ENCODE measurements at regions of chr11 and their contacts with region 1.

Region 1: GRCh38 chr11:108497317-108498045 is 703 bp downstream of the POGLUT3 start:
- DNase-seq: peak; percentile 68
- H3K4me3 Mint-ChIP-seq: peak overlapping the region; percentile 93
- H3K27ac Mint-ChIP-seq: peak overlapping the region; percentile 98
- H3K4me1 Mint-ChIP-seq: peaks cover 23% of the 10 kb centered on the region
- H3K27me3 Mint-ChIP-seq: peaks cover 4% of the 10 kb centered on the region

Region 2: GRCh38 chr11:108008656-108009496 is 488.6 kb before region 1 on chr11 and contains the start of gene CUL5:
- intact Hi-C with region 1: loop called (anchors 1 kb)
- DNase-seq: peak; percentile 86
- H3K4me3 Mint-ChIP-seq: peak within 1 kb of the TSS; percentile 91
- H3K27ac Mint-ChIP-seq: peak within 1 kb of the TSS; percentile 94
- H3K4me1 Mint-ChIP-seq: peaks cover 16% of the 10 kb centered on the region
- H3K27me3 Mint-ChIP-seq: no peaks in the 10 kb centered on the region
- total RNA-seq, gene CUL5: 33.7 and 34.2 TPM in 2 replicates

Region 3: DNA sequence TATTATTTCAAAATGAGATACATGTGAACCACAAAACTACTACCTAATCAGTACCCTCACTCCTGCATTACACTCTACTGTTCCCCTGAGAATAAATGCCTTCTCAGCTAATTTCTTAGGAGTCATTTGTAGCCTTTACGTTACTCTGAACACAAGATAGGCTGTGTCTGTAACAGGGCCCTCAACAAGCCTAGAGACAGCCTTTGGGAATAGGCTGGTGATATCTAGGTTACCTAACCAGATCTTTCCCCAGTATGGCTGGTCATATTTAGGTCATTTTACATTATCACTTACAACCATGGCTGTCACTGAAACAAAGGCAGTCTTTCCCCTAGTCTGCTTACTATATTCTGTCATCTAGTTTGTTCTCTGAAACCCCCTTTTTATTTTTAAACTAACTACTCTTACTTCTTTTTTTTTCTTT is 260.4 kb before region 1 on chr11:
- intact Hi-C with region 1: loop called (anchors 5 kb)
- DNase-seq: no peak
- H3K4me3 Mint-ChIP-seq: peak overlapping the region; percentile 66
- H3K27ac Mint-ChIP-seq: peak overlapping the region; percentile 83
- H3K4me1 Mint-ChIP-seq: peaks cover 59% of the 10 kb centered on the region
- H3K27me3 Mint-ChIP-seq: no peaks in the 10 kb centered on the region

Region 4: DNA sequence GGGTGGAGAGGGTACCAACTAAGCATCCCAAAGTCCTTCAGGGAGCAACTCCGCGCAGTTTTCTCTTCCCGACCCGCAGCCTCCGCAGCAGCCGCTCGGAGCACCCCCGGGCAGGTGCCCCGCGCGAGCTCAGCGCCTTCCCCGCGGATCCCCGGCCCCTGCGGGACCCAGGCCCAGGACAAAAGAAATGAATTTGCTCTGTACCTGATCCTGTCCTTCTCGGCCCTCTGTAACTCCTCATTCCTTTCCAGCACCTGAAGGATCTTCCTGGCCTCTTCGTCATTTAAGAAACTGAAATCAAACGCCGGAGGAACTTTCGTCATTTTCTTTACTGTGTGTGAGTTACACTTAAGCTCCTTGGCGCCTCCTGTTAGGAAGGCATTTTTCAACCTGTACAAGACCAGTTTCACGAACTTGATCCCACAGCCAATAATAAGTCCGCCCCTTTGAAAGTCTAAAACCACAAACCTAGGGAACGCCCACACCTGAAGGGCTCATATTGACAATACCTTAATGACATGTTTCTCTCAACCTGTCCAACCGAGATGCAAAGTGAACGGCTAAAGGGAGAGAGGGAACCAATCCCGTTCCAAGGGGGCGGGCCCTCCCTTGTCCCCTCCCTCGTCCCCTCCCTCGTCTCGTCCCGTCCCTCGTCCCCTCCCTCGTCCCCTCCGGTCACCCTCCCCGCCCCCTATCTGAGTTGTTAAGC is 95.9 kb after region 1 on chr11 and contains the start of gene EXPH5:
- intact Hi-C with region 1: loop called (anchors 2 kb)
- DNase-seq: peak; percentile 75
- H3K4me3 Mint-ChIP-seq: peak within 1 kb of the TSS; percentile 98
- H3K27ac Mint-ChIP-seq: peak within 1 kb of the TSS; percentile 91
- H3K4me1 Mint-ChIP-seq: peaks cover 17% of the 10 kb centered on the region
- H3K27me3 Mint-ChIP-seq: peaks cover 53% of the 10 kb centered on the region
- total RNA-seq, gene EXPH5: 1.2 and 1.8 TPM in 2 replicates

Region 5: GRCh38 chr11:108664730-108665525 is 167.4 kb after region 1 on chr11 and contains the start of gene DDX10:
- intact Hi-C with region 1: loop called (anchors 5 kb)
- DNase-seq: peak; percentile 98
- H3K4me3 Mint-ChIP-seq: peak within 1 kb of the TSS; percentile 99
- H3K27ac Mint-ChIP-seq: peak within 1 kb of the TSS; percentile 97
- H3K4me1 Mint-ChIP-seq: peaks cover 28% of the 10 kb centered on the region
- H3K27me3 Mint-ChIP-seq: peaks cover 6% of the 10 kb centered on the region
- total RNA-seq, gene DDX10: 57.8 TPM in 2 replicates